ENCODE measurements at regions of chr10 and their contacts with region 1.

Region 1: GRCh38 chr10:88880282-88881076 is 434 bp downstream of the STAMBPL1 start:
- DNase-seq: peak; percentile 28 to 79 (median 64)
- ATAC-seq: peak; percentile 78 to 82
- H3K4me3 Mint-ChIP-seq: peak overlapping the region; percentile 93 to 99 (median 98)
- H3K27ac Mint-ChIP-seq: peak overlapping the region; percentile 91 to 97 (median 96)
- H3K4me1 Mint-ChIP-seq: peaks cover 19 to 60% (median 59%) of the 10 kb centered on the region in 4 donors
- H3K27me3 Mint-ChIP-seq: no peaks in the 10 kb centered on the region

Region 2: GRCh38 chr10:88826388-88826787 is 54.1 kb before region 1 on chr10:
- POLR2A ChIA-PET with region 1: interaction called, 16 read pairs
- DNase-seq: no peak
- ATAC-seq: peak in 1 of 2 donors; percentile 47
- H3K4me3 Mint-ChIP-seq: peak overlapping the region in 9 of 10 donors; percentile 7 to 64 (median 45)
- H3K27ac Mint-ChIP-seq: peak overlapping the region; percentile 16 to 98 (median 78)
- H3K4me1 Mint-ChIP-seq: peaks cover 26 to 53% (median 49%) of the 10 kb centered on the region in 4 donors
- H3K27me3 Mint-ChIP-seq: peaks cover 0 to 4% (median 0%) of the 10 kb centered on the region in 5 donors

Region 3: DNA sequence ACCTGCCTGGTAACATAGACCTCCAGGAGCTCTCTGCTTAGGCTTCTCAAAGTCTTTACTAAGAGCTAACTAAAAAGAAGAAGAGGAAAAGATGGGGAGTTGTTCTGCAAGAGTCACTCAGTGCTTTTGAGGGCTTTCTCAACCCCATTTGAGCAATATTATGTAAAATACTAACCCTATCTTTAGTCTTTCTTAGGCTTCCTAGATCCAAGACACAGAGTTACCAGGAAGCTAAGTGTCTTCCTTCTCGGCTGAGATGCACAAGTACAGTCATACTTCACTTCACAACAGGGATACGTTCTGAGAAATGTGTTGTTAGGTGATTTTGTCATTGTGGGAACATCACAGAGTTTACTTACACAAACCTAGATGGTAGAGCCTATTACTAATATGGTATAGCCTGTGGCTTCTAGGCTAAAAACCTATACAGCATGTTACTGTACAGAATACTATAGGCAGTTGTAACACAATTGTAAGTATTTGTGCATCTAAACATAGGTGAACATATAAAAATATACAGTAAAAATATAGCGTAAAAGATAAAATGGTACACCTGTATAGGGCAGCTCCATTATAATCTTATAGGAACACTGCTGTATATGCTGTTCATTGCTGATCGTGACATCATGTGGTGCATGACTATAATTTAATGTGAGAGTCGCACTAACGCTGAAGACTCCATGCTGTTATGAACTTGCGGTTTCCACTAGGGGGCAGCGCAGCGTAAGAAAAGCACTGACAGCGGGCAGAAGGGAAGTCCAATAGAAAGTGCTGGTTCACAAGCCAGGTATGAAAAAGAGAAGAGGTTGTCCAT is 45.2 kb before region 1 on chr10:
- POLR2A ChIA-PET with region 1: interaction called, 15 read pairs
- DNase-seq: peak; percentile 64 to 91 (median 81)
- ATAC-seq: peak; percentile 95 to 97
- H3K4me3 Mint-ChIP-seq: no peak overlapping the region
- H3K27ac Mint-ChIP-seq: no peak overlapping the region
- H3K4me1 Mint-ChIP-seq: peaks cover 10 to 32% (median 28%) of the 10 kb centered on the region in 4 donors
- H3K27me3 Mint-ChIP-seq: peaks cover 0 to 4% (median 0%) of the 10 kb centered on the region in 5 donors

Region 4: DNA sequence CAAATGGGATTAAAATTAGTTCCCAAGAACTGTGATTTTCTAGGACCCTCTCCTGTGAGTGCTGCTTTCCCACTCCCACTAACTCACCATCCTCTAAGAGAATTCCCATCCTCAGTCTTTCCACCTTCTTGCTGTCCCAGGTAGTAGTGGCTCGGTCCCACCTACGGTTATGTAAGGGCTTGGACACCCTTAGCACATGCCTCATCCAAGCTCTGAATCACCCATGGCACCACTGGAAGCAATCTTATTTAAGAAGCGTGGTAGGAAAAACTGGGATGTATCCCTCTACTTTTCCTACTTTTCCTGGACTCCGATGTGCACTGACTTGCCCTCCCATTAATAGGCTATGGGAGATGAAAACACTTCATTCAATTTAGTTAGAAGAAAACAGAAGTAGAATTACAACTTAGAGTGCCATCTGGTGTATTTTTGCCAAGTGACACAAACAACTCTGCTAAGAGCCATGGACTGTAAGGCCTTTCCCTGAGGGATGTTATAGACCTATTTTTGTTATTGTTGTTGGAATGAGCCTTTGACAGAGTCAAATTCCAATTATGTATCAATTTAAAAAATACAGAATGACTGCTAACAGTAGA is 15.1 kb before region 1 on chr10:
- POLR2A ChIA-PET with region 1: no interaction called
- DNase-seq: no peak
- ATAC-seq: no peak
- H3K4me3 Mint-ChIP-seq: no peak overlapping the region
- H3K27ac Mint-ChIP-seq: no peak overlapping the region
- H3K4me1 Mint-ChIP-seq: no peaks in the 10 kb centered on the region
- H3K27me3 Mint-ChIP-seq: peaks cover 2 to 10% (median 3%) of the 10 kb centered on the region in 5 donors